Ascending aorta (tissue), 2 donors: ENCODE measurements at regions of chr19 and their contacts with region 1.

Region 1: GRCh38 chr19:48321622-48322591 is 3.4 kb upstream of the EMP3 start:
- DNase-seq: peak; percentile 94 to 99
- H3K4me3 ChIP-seq: peak overlapping the region; percentile 55 to 79
- H3K27ac ChIP-seq: peak overlapping the region; percentile 97 to 99
- H3K4me1 ChIP-seq: peaks cover 0 to 31% of the 10 kb centered on the region in 2 donors
- H3K27me3 ChIP-seq: no peaks in the 10 kb centered on the region
- CTCF ChIP-seq: no peak

Region 2: DNA sequence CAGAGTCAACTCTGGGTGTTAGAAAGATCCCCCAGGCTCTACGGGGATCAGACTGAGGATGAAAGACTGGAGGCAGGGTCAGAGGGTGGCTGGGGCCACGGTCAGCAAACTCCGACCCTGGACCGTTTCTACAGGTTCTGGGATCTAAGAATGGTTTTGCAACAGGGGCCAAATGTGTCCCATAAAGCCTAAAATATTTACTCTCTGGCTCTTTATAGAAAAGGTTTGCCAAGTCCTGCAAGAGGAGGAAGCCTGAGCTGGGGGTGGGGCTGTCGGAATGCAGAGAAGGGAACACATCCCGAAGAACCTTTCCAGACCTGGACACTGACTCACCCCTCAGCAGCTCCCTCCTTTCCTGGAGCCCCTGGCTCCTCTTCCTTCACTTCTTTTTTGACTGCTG is 172.5 kb before region 1 on chr19:
- intact Hi-C with region 1: no loop called
- DNase-seq: no peak
- H3K4me3 ChIP-seq: no peak overlapping the region
- H3K27ac ChIP-seq: no peak overlapping the region
- H3K4me1 ChIP-seq: no peaks in the 10 kb centered on the region
- H3K27me3 ChIP-seq: no peaks in the 10 kb centered on the region
- CTCF ChIP-seq: no peak

Region 3: GRCh38 chr19:48391107-48391986 is 69.4 kb after region 1 on chr19 and contains the start of gene KDELR1:
- intact Hi-C with region 1: loop called (anchors 2 kb)
- DNase-seq: peak in 1 of 2 donors; percentile 80
- H3K4me3 ChIP-seq: peak within 1 kb of the TSS; percentile 85 to 94
- H3K27ac ChIP-seq: peak within 1 kb of the TSS; percentile 91 to 94
- H3K4me1 ChIP-seq: peaks cover 0 to 14% of the 10 kb centered on the region in 2 donors
- H3K27me3 ChIP-seq: peaks cover 28% of the 10 kb centered on the region
- CTCF ChIP-seq: peak; percentile 82 to 94 (median 90)
- total RNA-seq, gene KDELR1: 183 TPM